ENCODE measurements at regions of chr9 and their contacts with region 1.

Region 1: GRCh38 chr9:136400038-136400834 is at the start of gene SNAPC4:
- DNase-seq: peak; percentile 91
- H3K4me3 Mint-ChIP-seq: peak within 1 kb of the TSS; percentile 83
- H3K27ac Mint-ChIP-seq: peak within 1 kb of the TSS; percentile 76
- H3K4me1 Mint-ChIP-seq: peaks cover 50% of the 10 kb centered on the region
- H3K27me3 Mint-ChIP-seq: no peaks in the 10 kb centered on the region
- total RNA-seq, gene SNAPC4: 13.9 to 14.3 TPM

Region 2: DNA sequence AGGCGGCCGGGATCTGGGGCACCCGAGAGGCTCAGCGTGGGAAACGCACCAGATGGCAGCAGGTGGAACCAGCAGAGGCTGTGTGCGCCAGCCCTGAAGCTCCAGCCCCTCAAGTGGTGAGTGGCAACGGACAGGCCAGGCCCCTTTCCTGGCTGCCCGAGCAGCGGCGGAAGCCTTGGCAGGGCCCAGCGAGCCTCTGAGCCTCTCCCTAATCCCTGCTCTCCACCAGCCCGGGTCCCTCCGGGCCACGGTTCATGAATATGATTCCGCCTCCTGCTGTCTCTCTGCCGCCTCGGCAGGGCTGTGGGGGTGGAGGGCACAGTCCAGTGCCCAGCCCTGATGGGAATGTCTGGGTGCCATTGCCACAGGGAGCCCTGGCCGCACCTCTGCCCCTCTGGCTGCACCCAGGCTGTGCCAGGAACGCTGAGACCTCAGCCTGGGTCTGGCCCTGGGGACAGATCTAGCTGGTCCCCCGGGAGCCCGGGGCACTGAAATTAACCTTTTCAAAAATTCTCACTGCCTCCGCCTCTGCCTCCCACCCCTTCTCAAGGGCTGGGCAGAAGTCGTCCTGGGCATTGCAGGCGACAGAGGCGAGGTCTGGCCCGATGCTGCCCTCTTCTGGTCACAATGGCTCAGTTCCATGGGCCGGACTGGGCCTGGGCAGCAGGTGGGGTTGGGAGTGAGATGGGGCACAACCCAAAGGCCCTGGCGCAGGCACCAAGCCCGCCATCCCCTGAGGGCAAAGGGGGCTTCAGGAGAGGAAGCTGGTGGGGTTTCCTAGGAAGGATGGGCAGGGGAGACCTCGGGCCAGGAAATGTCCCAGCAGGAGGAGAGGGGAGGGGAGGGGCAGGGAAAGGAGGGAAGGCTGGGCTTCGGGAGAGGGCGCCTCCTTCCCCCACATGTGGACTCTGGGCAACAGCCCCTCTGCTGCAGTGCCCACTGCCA is 116.7 kb before region 1 on chr9:
- CTCF ChIA-PET with region 1: no interaction called
- POLR2A ChIA-PET with region 1: no interaction called
- intact Hi-C with region 1: no loop called
- DNase-seq: peak; percentile 82
- H3K4me3 Mint-ChIP-seq: no peak overlapping the region
- H3K27ac Mint-ChIP-seq: no peak overlapping the region
- H3K4me1 Mint-ChIP-seq: peaks cover 5% of the 10 kb centered on the region
- H3K27me3 Mint-ChIP-seq: peaks cover 4% of the 10 kb centered on the region

Region 3: DNA sequence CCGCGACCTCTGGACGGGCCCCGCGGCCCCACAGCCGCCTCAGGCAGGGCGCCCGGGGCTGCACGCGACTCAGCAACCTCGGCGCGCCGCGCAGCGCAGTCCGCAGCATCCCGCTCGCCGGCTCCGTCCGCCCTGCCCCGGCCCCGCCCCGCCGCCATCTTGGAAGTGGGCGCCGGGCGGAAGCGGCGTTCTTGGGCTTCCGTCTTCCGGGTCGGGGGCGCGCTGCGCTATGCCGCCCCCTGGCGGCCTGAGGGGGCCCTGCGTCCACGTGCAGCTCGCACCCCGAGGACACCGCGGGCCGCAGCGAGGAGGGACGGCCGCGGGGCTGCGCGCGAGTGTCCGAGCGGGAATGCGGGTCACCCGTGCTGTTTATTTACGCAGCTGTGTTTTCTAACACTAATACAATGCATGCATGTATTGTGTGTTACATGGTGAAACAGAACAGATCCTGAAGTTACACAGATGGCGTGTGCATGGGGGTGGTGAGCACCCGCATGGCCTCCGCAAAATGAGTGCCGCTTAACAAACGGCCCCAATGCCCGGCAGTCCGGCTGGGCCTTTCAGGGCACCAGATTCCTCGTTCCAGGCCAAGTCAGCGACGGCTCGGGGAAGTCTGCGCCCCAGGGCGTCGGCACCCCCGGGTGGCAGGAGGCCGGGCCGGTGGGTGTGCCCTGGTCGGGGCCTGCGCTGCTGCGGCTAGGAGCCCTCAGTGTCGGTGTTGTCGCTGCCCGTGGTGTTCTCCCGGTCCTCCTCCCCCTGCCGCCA is 36.4 kb before region 1 on chr9 and contains the start of gene DNLZ:
- CTCF ChIA-PET with region 1: interaction called, 13 read pairs
- POLR2A ChIA-PET with region 1: interaction called, 5 read pairs
- intact Hi-C with region 1: loop called (anchors 1 kb)
- DNase-seq: peak; percentile 90
- H3K4me3 Mint-ChIP-seq: peak within 1 kb of the TSS; percentile 83
- H3K27ac Mint-ChIP-seq: peak within 1 kb of the TSS; percentile 88
- H3K4me1 Mint-ChIP-seq: peaks cover 9% of the 10 kb centered on the region
- H3K27me3 Mint-ChIP-seq: no peaks in the 10 kb centered on the region
- total RNA-seq, gene DNLZ: 14.5 to 15.2 TPM

Region 4: DNA sequence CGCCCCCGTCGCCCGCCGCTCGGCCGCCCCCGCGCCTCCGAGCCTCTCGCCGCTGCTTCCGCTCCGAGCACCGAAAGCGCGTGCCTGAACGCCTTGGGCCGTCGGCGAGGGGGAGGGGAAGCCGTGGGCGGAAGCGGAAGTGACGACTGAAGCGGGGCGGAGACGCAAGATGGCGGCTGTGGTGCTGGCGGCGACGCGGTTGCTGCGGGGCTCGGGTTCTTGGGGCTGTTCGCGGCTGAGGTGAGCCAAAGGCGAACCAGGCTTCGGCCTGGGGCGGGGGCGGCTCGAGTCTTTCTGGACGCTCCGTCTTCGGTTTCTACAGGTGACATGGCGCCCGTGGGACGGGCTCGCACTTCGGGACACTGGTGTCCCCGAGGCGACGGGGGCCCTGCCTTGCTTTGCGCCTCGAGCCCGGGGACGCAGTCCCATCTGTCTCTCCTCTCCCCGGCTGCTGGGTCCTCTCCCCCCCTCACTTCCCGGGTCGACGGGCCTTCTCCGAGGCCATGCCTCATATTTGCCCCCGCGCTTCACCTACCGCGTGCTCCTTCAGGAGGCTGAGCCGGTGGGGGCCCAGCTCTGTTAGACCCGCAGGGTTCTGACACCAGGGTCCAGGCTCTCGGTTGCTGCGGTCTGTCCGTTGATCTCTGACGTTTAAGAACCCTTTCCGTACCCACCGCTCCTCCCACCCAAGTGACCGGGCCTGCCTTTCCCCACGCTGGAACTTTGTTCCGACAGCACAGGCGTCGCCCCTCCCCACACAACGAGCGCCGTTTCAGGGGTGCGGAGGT is 10.5 kb after region 1 on chr9 and contains the starts of genes ENTR1 and PMPCA:
- CTCF ChIA-PET with region 1: interaction called, 19 read pairs
- POLR2A ChIA-PET with region 1: interaction called, 7 read pairs
- intact Hi-C with region 1: no loop called
- DNase-seq: peak; percentile 97
- H3K4me3 Mint-ChIP-seq: peak within 1 kb of the TSS; percentile 91
- H3K27ac Mint-ChIP-seq: peak within 1 kb of the TSS; percentile 94
- H3K4me1 Mint-ChIP-seq: peaks cover 55% of the 10 kb centered on the region
- H3K27me3 Mint-ChIP-seq: no peaks in the 10 kb centered on the region
- total RNA-seq, gene ENTR1: 66.9 to 74.9 TPM
- total RNA-seq, gene PMPCA: 108 to 112 TPM

Region 5: DNA sequence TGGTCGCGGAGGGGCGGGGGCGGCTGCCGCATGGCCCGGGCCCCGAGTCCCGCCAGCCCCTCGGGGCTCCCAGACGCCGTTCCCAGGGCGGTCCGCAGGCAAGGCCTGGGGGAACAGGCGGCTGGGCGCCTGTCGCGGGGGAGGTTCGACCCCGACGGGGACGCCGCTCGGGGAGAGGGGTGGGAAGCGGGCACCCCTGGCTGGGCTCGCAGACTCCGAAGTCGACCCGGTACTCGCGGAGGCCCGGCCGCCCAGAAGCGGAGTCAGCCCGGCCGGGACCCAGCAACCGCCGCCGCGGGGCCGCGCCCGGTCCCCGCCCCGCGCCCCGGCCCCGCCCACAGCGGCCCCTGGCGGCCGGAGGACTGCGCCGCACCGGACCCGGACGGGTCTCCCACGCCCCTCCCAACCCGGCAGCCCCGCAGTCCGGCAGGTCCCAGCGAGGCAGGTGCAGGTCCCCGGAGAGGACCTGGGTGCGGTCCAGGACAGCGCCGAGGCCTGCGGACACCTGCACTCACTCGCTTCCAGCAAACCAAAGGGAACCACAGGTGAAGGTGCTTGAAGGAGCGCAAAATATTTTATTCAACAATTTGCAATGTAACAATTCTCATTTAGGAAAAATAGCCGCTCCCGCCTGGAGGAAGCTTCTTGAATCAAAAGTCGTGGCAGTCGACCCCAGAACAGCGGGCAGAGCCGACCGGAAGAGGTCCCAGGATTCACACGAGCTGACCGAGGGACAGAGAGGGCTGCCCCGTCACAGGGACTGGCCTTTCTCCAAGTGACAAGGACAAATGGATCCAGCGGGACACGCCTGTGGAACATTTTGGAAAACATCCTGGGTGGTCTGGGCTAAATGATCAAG is 39.5 kb after region 1 on chr9 and contains the start of gene INPP5E:
- CTCF ChIA-PET with region 1: interaction called, 3 read pairs
- POLR2A ChIA-PET with region 1: interaction called, 3 read pairs
- intact Hi-C with region 1: loop called (anchors 5 kb)
- DNase-seq: peak; percentile 84
- H3K4me3 Mint-ChIP-seq: peak within 1 kb of the TSS; percentile 88
- H3K27ac Mint-ChIP-seq: peak within 1 kb of the TSS; percentile 23
- H3K4me1 Mint-ChIP-seq: peaks cover 23% of the 10 kb centered on the region
- H3K27me3 Mint-ChIP-seq: no peaks in the 10 kb centered on the region
- total RNA-seq, gene INPP5E: 18.8 to 21.3 TPM

Region 6: DNA sequence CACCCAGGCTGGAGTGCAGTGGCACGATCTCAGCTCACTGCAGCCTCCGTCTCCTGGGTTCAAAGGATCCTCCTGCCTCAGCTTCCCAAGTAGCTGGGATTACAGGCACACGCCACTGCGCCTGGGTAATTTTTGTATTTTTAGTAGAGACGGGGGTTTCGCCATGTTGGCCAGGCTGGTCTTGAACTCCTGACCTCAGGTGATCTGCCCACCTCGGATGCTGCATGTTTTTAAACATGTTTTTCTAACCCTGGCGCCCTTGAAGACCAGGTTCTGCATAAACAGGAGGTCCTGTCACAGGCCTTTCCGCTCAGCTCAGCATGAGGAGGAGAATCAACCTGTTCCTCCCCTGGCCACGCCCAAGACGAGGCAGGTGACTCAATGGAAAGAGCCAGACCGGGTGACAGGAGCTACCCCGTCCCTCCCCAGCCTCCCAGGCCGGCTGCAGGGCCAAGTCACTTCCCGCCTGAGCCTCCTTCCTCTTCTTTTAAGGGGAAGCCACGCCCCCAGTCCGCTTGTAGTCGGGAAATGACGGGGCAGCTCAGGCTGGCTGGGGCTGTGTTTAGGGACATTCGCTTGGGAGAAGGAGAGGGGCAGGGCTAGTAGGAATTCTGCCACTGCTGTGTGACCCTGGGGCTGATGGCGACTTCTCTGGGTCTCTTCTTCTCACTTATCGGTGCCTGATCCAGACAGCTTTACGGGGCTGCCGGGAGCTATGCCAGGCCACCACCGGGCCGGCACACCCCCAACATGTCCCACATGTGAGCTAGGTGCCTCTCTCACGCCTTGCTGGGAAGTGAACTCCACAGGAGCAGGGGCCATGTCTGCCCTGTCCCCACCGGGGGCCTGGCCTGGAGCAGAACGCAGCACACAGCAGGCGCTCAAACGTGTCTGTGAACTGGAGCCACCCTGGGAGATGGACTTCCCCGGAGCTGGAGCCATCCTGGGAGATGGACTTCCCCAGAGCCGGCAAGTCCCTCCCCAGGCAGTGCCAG is 139.5 kb after region 1 on chr9:
- CTCF ChIA-PET with region 1: interaction called, 4 read pairs
- POLR2A ChIA-PET with region 1: no interaction called
- intact Hi-C with region 1: loop called (anchors 2 kb)
- DNase-seq: peak; percentile 99
- H3K4me3 Mint-ChIP-seq: peak overlapping the region; percentile 78
- H3K27ac Mint-ChIP-seq: peak overlapping the region; percentile 99
- H3K4me1 Mint-ChIP-seq: peaks cover 73% of the 10 kb centered on the region
- H3K27me3 Mint-ChIP-seq: no peaks in the 10 kb centered on the region